ENCODE measurements at regions of chrX and their contacts with region 1.

Region 1: DNA sequence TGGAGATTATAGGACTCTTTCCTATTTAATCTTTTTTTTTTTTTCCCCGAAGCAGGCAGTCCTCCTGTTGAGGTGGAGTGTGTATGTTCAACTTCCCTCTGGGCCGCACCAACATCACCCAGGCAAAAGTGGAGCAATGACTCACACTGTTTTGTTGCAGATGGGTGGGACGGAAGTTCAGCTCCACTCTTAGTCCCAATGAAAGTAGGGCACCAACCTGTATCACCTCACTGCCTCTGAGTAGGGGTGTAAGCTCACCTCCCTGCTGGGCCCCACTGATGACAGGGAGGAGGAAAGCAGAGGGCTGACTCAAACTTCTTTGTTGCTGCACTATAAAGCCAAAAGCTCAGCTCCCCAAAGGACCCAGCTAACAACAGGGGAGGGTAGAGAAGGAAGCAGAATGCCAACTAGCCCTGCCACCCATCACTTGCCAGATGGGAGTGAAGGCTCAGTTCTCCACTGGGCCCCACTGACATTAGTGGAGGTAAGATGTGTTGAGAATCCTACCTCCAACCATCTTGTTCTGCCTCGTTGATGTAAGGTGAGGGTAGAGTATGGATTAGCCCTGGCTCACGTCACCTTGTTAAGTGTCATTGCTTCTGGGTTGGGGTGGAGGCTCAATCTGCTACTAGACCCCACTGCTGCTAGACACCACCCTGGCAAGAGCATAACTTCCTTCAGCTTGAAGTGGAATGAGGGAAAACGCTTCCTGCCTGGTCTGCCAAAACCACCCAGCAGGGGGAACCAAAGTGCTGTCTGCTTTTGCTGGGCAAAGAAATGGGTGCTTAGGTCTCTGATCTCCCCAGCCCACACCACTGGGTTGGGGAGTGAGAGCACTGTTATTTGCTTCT is 14.1 kb downstream of the RPS6KA3 start:
- DNase-seq: peak; percentile 76
- ATAC-seq: peak; percentile 90
- H3K4me3 Mint-ChIP-seq: no peak overlapping the region
- H3K27ac Mint-ChIP-seq: peak overlapping the region; percentile 78
- H3K4me1 Mint-ChIP-seq: peaks cover 47% of the 10 kb centered on the region
- H3K27me3 Mint-ChIP-seq: no peaks in the 10 kb centered on the region

Region 2: GRCh38 chrX:20442597-20442996 is 190.0 kb after region 1 on chrX:
- CTCF ChIA-PET with region 1: interaction called, 17 read pairs
- POLR2A ChIA-PET with region 1: no interaction called
- intact Hi-C with region 1: loop called (anchors 1 kb)
- DNase-seq: peak; percentile 91
- ATAC-seq: peak; percentile 87
- H3K4me3 Mint-ChIP-seq: no peak overlapping the region
- H3K27ac Mint-ChIP-seq: no peak overlapping the region
- H3K4me1 Mint-ChIP-seq: peaks cover 44% of the 10 kb centered on the region
- H3K27me3 Mint-ChIP-seq: no peaks in the 10 kb centered on the region

Region 3: GRCh38 chrX:20718592-20719389 is 466.2 kb after region 1 on chrX:
- CTCF ChIA-PET with region 1: no interaction called
- POLR2A ChIA-PET with region 1: no interaction called
- intact Hi-C with region 1: no loop called
- DNase-seq: no peak
- ATAC-seq: no peak
- H3K4me3 Mint-ChIP-seq: no peak overlapping the region
- H3K27ac Mint-ChIP-seq: no peak overlapping the region
- H3K4me1 Mint-ChIP-seq: no peaks in the 10 kb centered on the region
- H3K27me3 Mint-ChIP-seq: peaks cover 5% of the 10 kb centered on the region

Measured in activated CD4-positive, alpha-beta T cell treated with anti-CD3 and anti-CD28 coated beads for 36 hours (primary cell).